BJ (cell line): ENCODE measurements at regions of chr17 and their contacts with region 1.

Region 1: GRCh38 chr17:2244545-2245525 is 58.8 kb downstream of the SMG6 start:
- DNase-seq: peak; percentile 82
- H3K4me3 ChIP-seq: no peak overlapping the region
- H3K27me3 ChIP-seq: no peaks in the 10 kb centered on the region
- CTCF ChIP-seq: peak; percentile 97

Region 2: DNA sequence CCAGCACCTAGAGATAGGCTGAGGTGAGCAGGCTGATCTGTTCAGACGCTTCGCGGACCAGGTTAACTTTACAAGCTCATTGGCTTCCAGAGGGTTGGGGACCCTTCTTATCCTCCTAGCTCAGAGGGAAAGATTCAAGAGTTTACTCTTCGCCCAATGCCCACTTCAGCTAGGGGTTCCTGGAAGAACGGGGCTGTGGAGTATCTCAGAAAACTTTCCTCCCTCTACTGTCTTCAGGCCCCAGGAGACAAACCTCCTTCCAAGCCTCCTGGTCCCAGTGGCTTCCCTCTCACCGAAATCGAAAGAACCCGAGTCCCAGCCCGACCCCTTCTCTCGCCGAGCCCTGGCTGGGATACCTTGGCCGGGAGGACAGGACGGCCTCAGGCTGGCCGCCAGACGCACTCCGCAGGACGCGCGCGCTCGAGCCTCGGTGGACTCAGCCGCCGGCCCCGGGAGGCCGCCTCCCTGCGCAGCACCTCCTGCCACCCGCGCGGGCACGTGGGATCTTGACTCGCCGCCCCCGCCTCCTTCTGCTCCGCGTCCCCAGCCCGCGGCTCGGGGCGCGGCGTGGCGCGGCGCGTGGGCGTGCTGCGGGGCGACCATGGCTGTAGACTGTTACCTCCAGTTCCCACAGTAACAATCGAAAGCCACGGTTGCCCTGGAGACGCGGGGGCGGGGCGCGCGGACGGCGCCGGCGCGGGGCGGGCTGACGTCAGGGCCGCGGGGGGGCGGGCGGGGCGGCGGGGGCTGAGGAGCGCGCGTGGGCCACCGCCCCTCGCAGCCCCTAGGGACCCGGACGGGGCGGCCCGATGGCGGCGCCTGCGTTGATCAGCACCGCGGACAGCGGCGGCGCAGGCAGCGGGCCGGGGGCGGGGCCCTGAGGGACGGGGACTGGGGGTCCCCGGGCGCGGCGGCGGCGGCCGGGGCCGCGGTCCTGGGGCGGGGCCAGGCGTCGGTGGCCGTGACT is 195.2 kb before region 1 on chr17:
- CTCF ChIA-PET with region 1: interaction called, 310 read pairs
- POLR2A ChIA-PET with region 1: no interaction called
- DNase-seq: no peak
- H3K4me3 ChIP-seq: peak overlapping the region; percentile 55
- H3K27me3 ChIP-seq: no peaks in the 10 kb centered on the region
- CTCF ChIP-seq: no peak

Region 3: GRCh38 chr17:2070241-2071023 is 174.4 kb before region 1 on chr17:
- CTCF ChIA-PET with region 1: interaction called, 58 read pairs
- POLR2A ChIA-PET with region 1: no interaction called
- DNase-seq: no peak
- H3K4me3 ChIP-seq: no peak overlapping the region
- H3K27me3 ChIP-seq: no peaks in the 10 kb centered on the region
- CTCF ChIP-seq: no peak

Region 4: DNA sequence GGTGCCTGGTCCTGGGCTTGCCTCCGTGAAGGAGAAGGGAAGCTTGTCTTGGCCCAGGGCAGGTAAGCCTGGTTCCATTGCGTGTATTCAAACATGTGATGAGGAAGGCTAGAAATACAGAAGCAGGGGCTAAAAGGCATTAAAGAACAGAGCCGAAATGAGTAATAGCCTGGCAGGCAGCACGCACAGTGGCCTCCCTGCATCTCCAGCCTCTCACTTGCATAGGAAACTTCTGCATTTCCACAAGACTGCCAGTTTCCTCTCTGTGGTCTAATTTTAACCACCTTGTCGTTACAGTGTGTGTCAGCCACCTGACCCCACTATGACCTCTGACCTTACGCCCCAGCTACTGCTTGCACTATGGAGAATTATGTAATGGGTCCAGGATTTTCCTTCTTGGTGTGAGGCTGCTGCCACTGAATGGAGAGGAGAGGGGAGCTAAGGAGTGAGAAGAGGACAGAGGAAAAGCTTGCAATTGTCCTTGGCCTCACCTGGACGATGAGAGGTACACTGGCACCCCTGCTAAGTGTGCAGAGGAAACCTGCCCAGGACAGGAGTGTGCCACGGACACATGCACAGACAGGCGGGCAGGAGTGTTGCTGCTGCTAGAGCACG is 157.1 kb before region 1 on chr17:
- CTCF ChIA-PET with region 1: interaction called, 20 read pairs
- POLR2A ChIA-PET with region 1: interaction called, 4 read pairs
- DNase-seq: no peak
- H3K4me3 ChIP-seq: no peak overlapping the region
- H3K27me3 ChIP-seq: no peaks in the 10 kb centered on the region
- CTCF ChIP-seq: no peak

Region 5: GRCh38 chr17:2137342-2138098 is 107.3 kb before region 1 on chr17:
- CTCF ChIA-PET with region 1: interaction called, 13 read pairs
- POLR2A ChIA-PET with region 1: no interaction called
- DNase-seq: peak; percentile 50
- H3K4me3 ChIP-seq: no peak overlapping the region
- H3K27me3 ChIP-seq: no peaks in the 10 kb centered on the region
- CTCF ChIP-seq: no peak

Region 6: DNA sequence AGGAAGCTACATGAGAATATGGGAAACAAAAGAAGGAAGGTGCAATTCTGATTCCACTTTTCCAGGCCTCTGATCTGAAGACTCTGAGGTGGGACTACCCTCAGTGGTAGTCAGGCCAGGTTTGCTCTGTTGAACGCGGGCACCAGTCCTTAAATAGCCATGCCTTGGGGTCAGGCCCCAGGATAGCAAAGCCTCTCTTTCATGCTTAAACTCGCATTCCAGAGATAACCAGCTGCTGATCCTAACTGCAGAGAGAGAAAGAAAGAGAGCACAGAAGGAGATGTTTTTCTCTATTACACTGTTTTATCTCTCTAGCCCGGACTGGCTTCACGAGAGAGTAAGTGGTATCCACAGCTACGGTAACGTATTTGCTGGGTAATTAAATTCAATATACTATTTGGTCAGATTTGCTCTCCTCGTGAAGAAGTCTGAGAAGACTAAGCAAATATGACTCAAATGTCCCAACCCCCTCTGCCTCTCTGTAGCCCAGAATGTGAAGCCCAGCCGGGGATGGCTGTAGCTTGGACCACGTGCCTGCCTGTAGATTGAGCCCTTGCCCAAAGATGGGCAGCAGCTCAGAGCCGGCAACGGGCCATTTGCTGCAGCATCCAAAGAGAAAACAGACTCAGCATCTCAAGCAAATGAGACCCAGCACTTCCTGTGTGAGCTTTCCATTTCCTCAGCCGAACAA is 63.5 kb before region 1 on chr17:
- CTCF ChIA-PET with region 1: interaction called, 10 read pairs
- POLR2A ChIA-PET with region 1: no interaction called
- DNase-seq: no peak
- H3K4me3 ChIP-seq: no peak overlapping the region
- H3K27me3 ChIP-seq: no peaks in the 10 kb centered on the region
- CTCF ChIP-seq: no peak

Region 7: DNA sequence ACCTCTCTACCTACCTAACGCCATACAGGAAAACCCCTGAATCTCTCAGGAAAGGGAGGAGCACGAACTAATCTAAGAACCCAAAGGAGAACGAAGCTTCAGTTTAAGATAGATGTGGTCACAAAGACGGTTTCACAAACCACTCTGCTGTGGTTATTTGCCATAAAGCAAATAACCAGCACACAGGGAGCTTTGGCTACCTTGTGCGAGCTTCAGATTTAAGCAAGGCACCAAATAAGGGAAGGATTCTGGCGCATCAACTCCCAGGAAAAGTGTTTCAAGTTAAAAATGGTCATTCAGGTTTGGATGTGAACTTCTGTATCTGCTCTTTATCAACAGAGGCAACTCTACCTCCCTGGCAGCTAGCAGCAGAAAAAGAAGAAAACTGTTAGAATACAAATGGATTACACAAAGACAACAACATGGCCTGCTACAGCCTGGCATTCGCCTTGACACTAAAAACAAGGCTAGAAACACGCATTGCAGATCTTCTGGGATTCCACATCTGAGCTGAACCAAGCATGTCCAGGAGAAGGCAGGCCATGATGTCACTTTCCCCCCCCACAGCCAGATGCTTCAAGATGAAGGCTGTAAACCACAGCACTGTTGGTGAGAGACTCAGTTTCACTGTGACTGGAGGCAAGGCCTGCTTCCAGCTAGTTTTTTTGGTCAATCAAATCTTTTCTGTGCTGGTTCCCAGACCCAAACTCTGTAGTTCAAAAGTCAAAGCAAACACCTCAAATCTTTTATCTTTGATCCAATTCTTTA is 15.1 kb after region 1 on chr17:
- CTCF ChIA-PET with region 1: interaction called, 29 read pairs
- POLR2A ChIA-PET with region 1: no interaction called
- DNase-seq: no peak
- H3K4me3 ChIP-seq: no peak overlapping the region
- H3K27me3 ChIP-seq: no peaks in the 10 kb centered on the region
- CTCF ChIP-seq: no peak

Region 8: DNA sequence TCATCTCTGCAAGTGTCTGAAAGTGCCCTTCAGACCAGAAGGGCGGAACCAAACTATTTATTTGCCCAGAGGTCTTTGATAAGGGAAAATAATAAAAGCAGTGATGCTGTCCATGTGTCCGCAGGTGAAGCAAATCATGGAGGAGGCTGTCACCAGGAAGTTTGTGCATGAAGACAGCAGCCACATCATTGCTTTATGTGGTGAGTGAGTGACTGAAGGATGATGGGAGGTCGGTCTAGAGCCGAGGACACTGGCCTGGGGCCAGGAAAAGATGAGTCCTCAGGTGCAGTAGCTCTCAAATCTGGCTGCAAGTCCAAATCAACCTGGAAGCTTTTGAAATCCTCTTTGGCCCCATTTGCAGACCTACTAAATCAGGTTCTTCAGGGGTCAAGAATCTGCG is 98.6 kb after region 1 on chr17:
- CTCF ChIA-PET with region 1: no interaction called
- POLR2A ChIA-PET with region 1: no interaction called
- DNase-seq: no peak
- H3K4me3 ChIP-seq: no peak overlapping the region
- H3K27me3 ChIP-seq: no peaks in the 10 kb centered on the region
- CTCF ChIP-seq: no peak

Region 9: DNA sequence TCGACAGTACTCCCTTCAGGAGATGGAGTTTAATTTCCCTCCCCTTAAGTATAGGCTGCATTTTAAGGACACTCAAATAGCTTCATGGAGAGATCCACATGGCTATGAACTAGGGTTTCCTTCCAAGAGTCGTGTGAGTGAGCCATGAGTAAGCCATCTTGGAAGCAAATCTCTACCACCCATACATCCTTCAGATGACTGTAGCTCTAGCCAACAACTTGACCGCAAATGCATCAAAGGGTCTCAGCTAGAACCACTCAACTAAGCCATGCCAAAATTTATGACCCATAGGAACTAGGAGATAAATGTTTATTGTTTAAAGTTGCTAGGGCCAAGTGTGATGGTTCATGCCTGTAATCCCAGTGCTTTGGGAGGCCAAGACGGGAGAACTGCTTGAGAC is 223.4 kb after region 1 on chr17:
- CTCF ChIA-PET with region 1: no interaction called
- POLR2A ChIA-PET with region 1: no interaction called
- DNase-seq: no peak
- H3K4me3 ChIP-seq: no peak overlapping the region
- H3K27me3 ChIP-seq: no peaks in the 10 kb centered on the region
- CTCF ChIP-seq: no peak